Dorsolateral prefrontal cortex (tissue), 120 donors: ENCODE measurements at regions of chr9 and their contacts with region 1.

Region 1: DNA sequence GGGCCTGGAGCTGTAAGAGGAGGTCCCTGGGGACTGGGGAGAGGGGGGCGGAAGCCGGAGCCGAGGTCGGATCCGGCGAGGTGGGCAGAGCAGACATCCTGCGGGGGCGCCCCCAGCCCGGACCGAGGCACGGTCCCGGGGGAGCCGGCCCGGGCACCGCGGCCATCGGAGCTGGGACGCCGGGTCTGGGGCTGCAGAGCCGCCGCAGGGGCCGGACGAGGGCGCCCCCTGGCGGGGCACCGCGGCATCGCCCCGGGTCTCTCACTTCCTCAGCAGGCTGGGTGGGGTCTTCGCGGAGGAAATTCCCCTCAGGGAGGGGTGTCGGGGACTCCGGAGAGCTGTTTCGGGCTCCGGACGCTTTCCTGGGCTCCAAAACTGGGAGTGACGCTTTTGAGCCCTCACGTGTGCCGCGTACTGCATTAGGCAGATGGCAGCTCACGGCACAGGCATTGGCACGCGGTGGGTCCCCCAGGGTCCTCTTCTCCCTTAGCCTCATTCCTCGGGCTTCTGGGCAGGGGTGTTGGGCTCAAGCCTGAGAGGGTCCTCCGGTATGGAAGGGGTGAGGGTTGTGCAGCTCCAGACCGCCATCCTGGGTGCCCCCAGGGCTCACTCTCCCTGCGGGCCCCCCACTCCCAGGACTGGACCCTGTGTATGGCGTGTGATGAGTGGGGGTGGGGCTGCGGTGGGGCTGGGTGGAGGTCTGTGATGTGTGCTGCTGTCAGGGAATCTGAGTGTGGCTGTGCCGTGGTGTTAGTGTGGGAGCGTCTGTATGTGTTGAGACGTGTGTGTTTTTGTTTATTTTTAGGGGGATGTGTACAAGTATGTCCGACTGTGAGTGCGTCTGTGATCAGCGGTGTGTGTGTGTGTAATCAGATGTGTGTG is 29.6 kb downstream of the LHX2 start:
- DNase-seq: peak in 2 of 10 donors; percentile 58 to 74
- H3K4me3 ChIP-seq: peak overlapping the region; percentile 9 to 70 (median 51)
- H3K27ac ChIP-seq: peak overlapping the region in 2 of 59 donors; percentile 56 to 67
- H3K27me3 ChIP-seq: peaks cover 0 to 50% (median 5%) of the 10 kb centered on the region in 45 donors
- CTCF ChIP-seq: peak; percentile 61 to 99 (median 94)

Region 2: DNA sequence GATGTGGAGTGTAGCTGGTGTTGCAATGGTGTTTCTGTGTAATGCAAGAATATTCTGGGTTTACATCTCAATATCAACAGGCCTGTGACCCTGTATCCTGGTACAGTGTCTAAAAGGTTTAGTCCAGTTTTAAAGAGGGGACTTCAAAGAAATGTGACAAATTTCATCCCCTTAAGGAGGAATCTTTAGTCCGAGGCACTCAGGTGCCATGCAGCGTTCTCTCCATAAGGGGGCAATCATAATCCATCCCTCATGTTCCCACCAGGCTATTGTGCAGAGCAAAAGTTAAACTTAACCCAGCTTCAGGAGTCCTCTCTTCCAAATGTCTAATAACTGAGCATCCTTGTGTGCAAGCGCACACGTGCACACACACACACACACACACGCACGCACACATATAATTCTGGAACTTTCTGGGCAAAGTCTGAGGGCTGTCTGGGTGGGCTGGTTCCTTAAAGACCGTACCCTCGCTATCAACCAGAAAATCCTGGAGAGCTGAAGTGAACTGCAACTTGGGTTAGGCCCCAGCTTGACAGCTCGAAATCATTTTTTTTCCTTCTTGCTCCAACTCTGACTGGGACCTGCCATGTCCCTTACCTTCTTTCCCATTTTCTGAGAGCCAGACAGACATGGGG is 639.2 kb before region 1 on chr9:
- intact Hi-C with region 1: loop called in 1 of 2 experiments (anchors 5 kb)
- DNase-seq: peak in 3 of 10 donors; percentile 29 to 65 (median 56)
- H3K4me3 ChIP-seq: no peak overlapping the region
- H3K27ac ChIP-seq: peak overlapping the region in 1 of 59 donors; percentile 7
- H3K27me3 ChIP-seq: no peaks in the 10 kb centered on the region
- CTCF ChIP-seq: peak; percentile 50 to 87 (median 76)

Region 3: GRCh38 chr9:123724211-123724796 is 316.9 kb before region 1 on chr9:
- intact Hi-C with region 1: loop called (anchors 5 to 10 kb)
- DNase-seq: peak in 5 of 10 donors; percentile 10 to 53 (median 41)
- H3K4me3 ChIP-seq: no peak overlapping the region
- H3K27ac ChIP-seq: peak overlapping the region in 19 of 59 donors; percentile 1 to 69 (median 27)
- H3K27me3 ChIP-seq: no peaks in the 10 kb centered on the region
- CTCF ChIP-seq: peak in 49 of 56 donors; percentile 20 to 70 (median 45)

Region 4: GRCh38 chr9:124079176-124079925 is 38.2 kb after region 1 on chr9:
- intact Hi-C with region 1: no loop called
- DNase-seq: peak; percentile 20 to 86 (median 71)
- H3K4me3 ChIP-seq: no peak overlapping the region
- H3K27ac ChIP-seq: peak overlapping the region in 19 of 59 donors; percentile 0 to 66 (median 44)
- H3K27me3 ChIP-seq: no peaks in the 10 kb centered on the region
- CTCF ChIP-seq: no peak